Tibial artery (tissue), 4 donors: ENCODE measurements at regions of chr5 and their contacts with region 1.

Region 1: GRCh38 chr5:131263648-131264450 is at the start of gene CDC42SE2:
- DNase-seq: peak; percentile 74 to 91
- H3K4me3 ChIP-seq: peak within 1 kb of the TSS; percentile 91 to 98
- H3K27ac ChIP-seq: peak within 1 kb of the TSS; percentile 78 to 85
- H3K4me1 ChIP-seq: peaks cover 0 to 12% (median 1%) of the 10 kb centered on the region in 4 donors
- H3K27me3 ChIP-seq: no peaks in the 10 kb centered on the region
- CTCF ChIP-seq: peak; percentile 3 to 22

Region 2: DNA sequence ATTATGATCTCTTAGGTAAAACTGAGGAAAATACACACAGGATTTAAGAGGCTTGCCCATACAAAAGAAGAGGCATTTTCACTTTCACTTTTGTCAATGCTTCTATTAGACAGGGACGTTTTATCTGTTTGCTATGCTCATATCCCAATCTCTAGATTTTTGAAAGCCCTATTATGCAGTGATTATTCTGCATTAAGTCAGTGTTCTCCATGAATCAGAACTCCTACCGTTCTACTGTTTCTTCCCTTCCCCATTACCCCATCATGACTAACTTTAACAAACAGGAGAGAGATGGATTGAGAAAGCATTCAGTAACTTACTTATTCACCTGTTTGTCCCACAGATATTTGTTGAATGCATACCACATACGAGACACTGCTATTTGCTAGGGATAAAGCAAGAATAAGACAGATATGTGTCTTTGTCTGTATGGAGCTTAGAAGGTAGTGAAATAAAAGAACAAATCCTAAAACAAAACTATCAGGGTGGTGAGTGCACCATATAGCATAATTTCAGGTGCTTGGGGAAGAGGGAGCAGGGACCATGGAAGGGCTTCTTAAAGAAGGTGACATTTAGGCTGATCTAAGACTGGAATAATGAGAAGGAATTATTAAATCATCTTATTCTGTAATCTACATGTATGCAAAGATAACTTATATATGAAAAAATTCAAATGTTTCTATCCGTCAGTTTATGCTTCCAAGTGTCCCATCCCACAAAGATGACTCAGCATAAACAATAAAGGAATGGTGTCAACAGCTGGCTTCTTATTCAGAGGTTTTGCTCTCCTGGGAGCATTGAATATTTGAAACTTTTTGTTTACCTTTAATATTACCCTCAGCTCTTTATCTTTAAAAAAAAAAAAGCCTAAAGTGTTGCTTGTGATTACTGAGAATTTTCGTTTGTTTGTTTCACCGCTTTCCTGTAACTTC is 426.9 kb before region 1 on chr5:
- intact Hi-C with region 1: no loop called
- DNase-seq: no peak
- H3K4me3 ChIP-seq: peak overlapping the region; percentile 7 to 23
- H3K27ac ChIP-seq: no peak overlapping the region
- H3K4me1 ChIP-seq: no peaks in the 10 kb centered on the region
- H3K27me3 ChIP-seq: no peaks in the 10 kb centered on the region
- CTCF ChIP-seq: no peak

Region 3: DNA sequence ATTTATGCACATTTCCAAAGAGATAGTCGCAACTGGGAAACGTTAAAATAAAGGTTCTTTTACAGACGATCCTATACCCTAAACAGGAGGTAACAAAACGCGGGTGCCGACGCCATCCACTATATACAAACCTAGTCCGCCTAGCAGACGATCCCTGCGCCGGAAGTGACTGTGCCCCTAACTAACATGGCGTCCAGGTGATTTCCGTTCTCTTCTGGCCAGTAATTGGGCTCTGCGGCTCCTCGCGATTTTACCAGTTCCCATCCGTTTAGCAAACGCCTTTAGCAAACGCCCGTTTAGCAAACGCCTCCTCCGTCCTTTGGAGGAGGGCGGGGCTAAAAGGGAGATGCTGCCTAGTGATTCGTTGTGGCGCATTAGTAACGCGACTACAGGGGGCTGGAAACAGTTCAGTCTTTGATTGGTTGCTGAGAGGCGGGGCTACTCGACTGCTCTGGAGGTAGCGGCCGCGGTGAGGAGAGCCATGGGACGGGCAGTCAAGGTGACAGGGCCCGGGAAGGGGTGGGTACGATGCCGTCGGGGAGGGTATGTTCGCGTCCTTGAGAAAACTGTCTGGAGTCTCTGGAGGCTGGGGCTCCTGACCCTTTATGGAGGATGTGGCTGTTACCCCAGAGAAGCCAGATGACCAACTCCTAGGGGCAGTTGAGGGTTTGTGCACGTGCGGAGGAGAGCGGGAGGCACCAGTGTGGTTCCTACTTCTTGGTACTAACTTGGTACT is 93.1 kb before region 1 on chr5 and contains the start of gene LYRM7:
- intact Hi-C with region 1: loop called (anchors 5 kb)
- DNase-seq: peak; percentile 97 to 99
- H3K4me3 ChIP-seq: peak within 1 kb of the TSS; percentile 56 to 65
- H3K27ac ChIP-seq: peak within 1 kb of the TSS; percentile 67 to 75
- H3K4me1 ChIP-seq: peaks cover 0 to 17% (median 8%) of the 10 kb centered on the region in 4 donors
- H3K27me3 ChIP-seq: no peaks in the 10 kb centered on the region
- CTCF ChIP-seq: no peak

Region 4: DNA sequence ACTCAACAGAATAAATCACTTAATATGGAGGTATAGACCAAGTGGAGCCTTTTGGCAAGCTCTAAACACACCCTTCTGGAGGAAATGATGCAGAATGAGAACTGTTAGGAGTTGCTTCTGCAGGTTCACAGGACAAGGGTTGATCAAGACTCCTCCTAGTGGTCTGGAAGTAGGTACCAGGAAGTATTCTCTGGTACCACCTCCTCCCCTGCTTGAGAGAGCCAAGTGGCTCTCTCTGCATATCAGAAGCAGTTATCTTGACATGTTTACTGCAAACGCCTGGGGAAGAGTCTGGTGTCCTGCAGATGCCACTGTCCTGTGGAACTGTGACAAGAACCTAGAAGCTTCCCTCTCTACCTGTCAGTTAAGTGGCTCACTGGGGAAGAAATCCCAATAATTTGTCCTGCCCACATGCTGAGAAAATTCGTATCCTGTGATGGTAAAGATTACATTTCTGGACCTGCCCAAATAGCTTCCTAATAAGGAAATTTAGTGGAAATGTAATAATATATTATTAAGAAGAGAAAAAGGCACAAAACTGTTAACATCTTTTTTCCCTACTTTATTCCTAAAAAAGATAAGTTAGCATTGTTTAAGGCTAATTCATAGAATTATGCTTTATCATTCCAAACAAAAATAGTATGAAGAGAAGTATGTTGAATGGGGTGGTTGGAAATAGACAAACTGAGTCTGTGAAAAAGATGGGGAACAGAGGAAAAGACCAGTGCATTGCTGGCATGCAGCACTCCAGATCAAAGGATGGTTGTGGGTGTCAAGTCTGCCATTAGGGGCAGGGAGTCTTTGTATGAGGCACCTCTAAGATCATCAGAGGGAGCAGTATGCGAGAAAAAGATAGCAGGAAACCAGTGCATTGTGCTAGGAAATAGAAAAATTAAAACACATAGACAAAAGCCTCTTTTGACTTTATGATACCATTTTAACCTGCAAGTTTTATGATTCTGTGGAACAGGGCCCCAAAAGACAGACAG is 118.9 kb after region 1 on chr5:
- intact Hi-C with region 1: loop called (anchors 10 kb)
- DNase-seq: no peak
- H3K4me3 ChIP-seq: no peak overlapping the region
- H3K27ac ChIP-seq: no peak overlapping the region
- H3K4me1 ChIP-seq: peaks cover 0 to 29% (median 3%) of the 10 kb centered on the region in 4 donors
- H3K27me3 ChIP-seq: no peaks in the 10 kb centered on the region
- CTCF ChIP-seq: no peak